OCI-LY7 (cell line): ENCODE measurements at regions of chr14 and their contacts with region 1.

Region 1: DNA sequence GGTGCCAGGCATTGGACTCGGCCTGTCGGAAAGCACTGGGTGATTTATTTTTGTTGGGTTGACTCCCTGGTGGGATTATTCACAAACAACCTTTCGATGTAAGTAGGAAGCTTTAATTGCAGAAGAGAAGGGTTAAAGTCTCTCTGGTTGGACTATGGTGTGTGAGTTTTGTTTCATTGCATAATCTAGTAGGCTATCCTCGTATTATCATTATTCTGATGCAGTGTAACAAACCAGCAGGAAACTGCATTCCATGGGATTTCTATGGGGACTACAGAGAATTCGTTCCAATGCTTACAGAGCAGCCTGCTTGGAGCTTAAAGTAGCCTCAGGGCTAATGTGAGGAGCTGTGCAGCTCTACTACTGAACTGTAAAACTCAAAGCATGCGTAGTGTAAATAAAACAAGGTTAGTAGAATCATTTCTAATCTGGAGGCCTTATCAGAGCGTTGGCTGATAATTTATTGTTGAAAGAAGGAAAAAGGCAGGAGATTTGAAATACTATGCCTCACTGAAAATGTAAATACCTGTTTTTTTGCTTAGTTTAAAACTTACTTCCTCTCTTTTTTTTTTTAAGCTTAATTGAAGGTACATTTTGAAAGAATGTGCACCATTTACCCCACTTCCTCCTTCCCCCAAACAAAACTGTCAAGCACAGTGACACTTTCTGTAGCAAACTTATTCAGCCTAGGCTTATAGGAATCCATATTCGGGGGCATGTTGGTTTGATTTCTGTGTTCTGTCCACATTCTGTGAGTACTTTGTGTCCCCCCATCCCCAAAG is 226.7 kb downstream of the NPAS3 start:
- DNase-seq: peak; percentile 23
- H3K4me3 ChIP-seq: no peak overlapping the region
- H3K27ac ChIP-seq: no peak overlapping the region
- H3K4me1 ChIP-seq: peaks cover 33% of the 10 kb centered on the region
- CTCF ChIP-seq: no peak

Region 2: DNA sequence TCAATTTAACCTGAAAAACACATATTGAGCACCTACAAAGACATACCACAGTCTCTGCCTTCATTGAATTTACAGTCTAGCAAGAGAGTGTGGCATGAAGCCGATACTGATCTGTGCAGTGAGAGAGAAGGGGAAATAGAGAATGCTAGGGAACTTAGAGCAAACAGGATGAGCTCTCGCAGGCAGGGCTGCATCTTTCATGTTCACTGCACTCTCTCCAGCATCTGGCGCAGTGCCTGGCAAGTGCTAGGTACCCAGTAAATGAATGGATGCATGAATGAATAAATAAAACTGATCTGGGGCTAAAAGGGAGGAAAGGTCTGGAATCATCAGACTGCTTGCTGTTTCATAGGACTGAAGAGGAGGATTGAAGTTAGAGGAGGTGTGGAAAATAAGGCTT is 483.1 kb before region 1 on chr14:
- CTCF ChIA-PET with region 1: no interaction called
- POLR2A ChIA-PET with region 1: no interaction called
- intact Hi-C with region 1: no loop called
- DNase-seq: no peak
- H3K4me3 ChIP-seq: no peak overlapping the region
- H3K27ac ChIP-seq: no peak overlapping the region
- H3K4me1 ChIP-seq: no peaks in the 10 kb centered on the region
- CTCF ChIP-seq: no peak

Region 3: DNA sequence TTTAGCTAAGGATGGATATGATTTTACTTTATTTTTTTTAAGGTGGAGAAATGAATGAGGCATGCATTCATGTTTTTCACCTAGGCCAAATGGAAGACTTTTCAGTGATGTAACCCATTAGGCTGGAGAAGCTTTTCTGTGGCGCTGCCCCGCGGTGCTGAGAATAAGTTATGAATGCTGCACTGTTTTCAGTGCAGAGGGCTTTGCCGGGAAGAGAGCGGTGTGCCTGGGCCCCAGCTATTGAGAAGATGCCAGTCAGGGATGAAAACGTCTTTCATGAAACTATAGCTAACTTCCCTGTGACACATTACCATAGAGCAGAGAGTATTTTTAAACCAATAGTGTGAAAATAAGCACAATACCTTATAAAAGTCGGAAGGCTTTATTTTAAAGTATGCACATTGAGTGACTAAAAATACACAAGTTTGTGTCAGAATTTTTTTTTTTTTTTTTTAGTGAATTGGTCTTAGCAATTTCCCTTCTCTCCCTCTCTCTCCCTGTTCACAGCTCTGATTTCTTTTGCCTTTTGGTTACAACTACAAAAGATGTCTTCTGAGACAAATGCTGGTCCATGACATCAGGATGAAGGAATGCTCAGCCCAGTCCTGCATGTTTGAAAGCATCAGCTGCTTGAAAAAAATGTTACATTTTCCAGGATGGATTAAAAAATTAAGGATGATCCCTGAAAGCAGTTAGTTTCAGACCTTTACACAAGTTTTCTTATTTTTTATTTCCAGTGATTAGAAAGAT is 178.4 kb before region 1 on chr14:
- CTCF ChIA-PET with region 1: no interaction called
- POLR2A ChIA-PET with region 1: no interaction called
- intact Hi-C with region 1: loop called (anchors 10 kb)
- DNase-seq: no peak
- H3K4me3 ChIP-seq: no peak overlapping the region
- H3K27ac ChIP-seq: no peak overlapping the region
- H3K4me1 ChIP-seq: peaks cover 46% of the 10 kb centered on the region
- CTCF ChIP-seq: no peak